GM12878 (cell line): ENCODE measurements at regions of chr3 and their contacts with region 1.

Region 1: GRCh38 chr3:152281133-152281713 is 12.5 kb downstream of the MBNL1 start:
- DNase-seq: no peak
- ATAC-seq: peak; percentile 68
- H3K4me3 ChIP-seq: peak overlapping the region; percentile 33; the same call in 1 of the 2 replicates
- H3K27ac ChIP-seq: peak overlapping the region; percentile 64
- H3K4me1 ChIP-seq: peaks cover 43% of the 10 kb centered on the region
- H3K27me3 ChIP-seq: no peaks in the 10 kb centered on the region
- CTCF ChIP-seq: no peak
- EP300 ChIP-seq: no peak
- POLR2A ChIP-seq: no peak
- RAD21 ChIP-seq: no peak

Region 2: GRCh38 chr3:152127058-152127457 is 154.2 kb before region 1 on chr3:
- CTCF ChIA-PET with region 1: no interaction called
- POLR2A ChIA-PET with region 1: no interaction called
- RAD21 ChIA-PET with region 1: no interaction called
- SMC1A ChIA-PET with region 1: no interaction called
- in situ Hi-C with region 1: no loop called
- intact Hi-C with region 1: no loop called
- DNase-seq: peak; percentile 85
- ATAC-seq: peak; percentile 98
- H3K4me3 ChIP-seq: no peak overlapping the region
- H3K27ac ChIP-seq: no peak overlapping the region
- H3K4me1 ChIP-seq: peaks cover 16% of the 10 kb centered on the region
- H3K27me3 ChIP-seq: no peaks in the 10 kb centered on the region
- CTCF ChIP-seq: no peak
- EP300 ChIP-seq: peak; percentile 77 to 83; a peak in 3 of 4 replicates
- POLR2A ChIP-seq: no peak
- RAD21 ChIP-seq: peak; percentile 12; the same call in 1 of the 2 replicates

Region 3: GRCh38 chr3:152241142-152242017 is 39.8 kb before region 1 on chr3:
- CTCF ChIA-PET with region 1: interaction called, 9 read pairs
- POLR2A ChIA-PET with region 1: interaction called, 4 read pairs
- RAD21 ChIA-PET with region 1: interaction called, 30 read pairs
- SMC1A ChIA-PET with region 1: interaction called, 39 read pairs
- in situ Hi-C with region 1: no loop called
- intact Hi-C with region 1: no loop called
- DNase-seq: no peak
- ATAC-seq: peak; percentile 69
- H3K4me3 ChIP-seq: no peak overlapping the region
- H3K27ac ChIP-seq: peak overlapping the region; percentile 91
- H3K4me1 ChIP-seq: peaks cover 27% of the 10 kb centered on the region
- H3K27me3 ChIP-seq: no peaks in the 10 kb centered on the region
- CTCF ChIP-seq: no peak
- EP300 ChIP-seq: no peak
- POLR2A ChIP-seq: no peak
- RAD21 ChIP-seq: no peak

Region 4: DNA sequence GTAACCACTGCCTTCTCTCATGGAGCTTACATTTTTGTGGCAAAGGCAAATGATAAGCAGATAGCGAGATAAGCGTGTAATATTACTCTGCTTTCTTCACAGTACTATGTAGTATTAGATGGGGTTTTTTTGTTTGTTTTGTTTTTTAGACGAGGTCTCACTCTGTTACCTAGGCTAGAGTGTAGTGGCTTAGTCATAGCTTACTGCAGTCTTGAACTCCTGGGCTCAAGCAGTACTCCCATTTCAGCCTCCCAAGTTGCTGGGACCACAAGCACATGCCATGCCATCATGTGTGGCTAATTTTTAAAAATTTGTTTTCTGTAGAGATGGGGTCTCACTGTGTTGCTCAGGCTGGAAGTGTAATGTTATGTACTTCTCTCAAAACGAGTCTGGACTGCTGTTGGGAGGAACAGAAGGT is 10.4 kb after region 1 on chr3:
- CTCF ChIA-PET with region 1: interaction called, 6 read pairs
- POLR2A ChIA-PET with region 1: interaction called, 3 read pairs
- RAD21 ChIA-PET with region 1: interaction called, 15 read pairs
- SMC1A ChIA-PET with region 1: interaction called, 115 read pairs
- in situ Hi-C with region 1: no loop called
- intact Hi-C with region 1: no loop called
- DNase-seq: no peak
- ATAC-seq: peak; percentile 47
- H3K4me3 ChIP-seq: no peak overlapping the region
- H3K27ac ChIP-seq: no peak overlapping the region
- H3K4me1 ChIP-seq: peaks cover 7% of the 10 kb centered on the region
- H3K27me3 ChIP-seq: no peaks in the 10 kb centered on the region
- CTCF ChIP-seq: no peak
- EP300 ChIP-seq: no peak
- POLR2A ChIP-seq: no peak
- RAD21 ChIP-seq: no peak

Region 5: DNA sequence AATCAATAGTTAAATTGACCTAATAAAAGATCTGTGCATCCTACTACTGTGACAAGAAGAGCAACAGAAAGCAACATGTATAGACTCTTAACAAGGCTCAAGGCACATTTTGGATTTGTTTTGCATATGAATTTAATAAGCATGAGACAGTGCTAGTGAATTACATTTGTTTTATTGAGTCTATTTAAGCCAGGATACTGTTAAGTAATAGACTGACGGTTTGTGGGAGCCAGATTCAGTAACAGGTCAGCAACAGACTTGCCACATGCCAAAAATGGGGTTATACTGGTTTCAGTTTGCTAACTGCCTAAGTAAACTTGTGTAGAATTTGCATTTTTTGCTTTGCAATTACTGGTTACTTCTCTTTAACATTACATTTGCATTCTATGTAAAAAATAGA is 41.5 kb after region 1 on chr3:
- CTCF ChIA-PET with region 1: interaction called, 3 read pairs
- POLR2A ChIA-PET with region 1: no interaction called
- RAD21 ChIA-PET with region 1: interaction called, 6 read pairs
- SMC1A ChIA-PET with region 1: interaction called, 16 read pairs
- in situ Hi-C with region 1: no loop called
- intact Hi-C with region 1: no loop called
- DNase-seq: peak; percentile 61
- ATAC-seq: peak; percentile 82
- H3K4me3 ChIP-seq: peak overlapping the region; percentile 6; the same call in 1 of the 2 replicates
- H3K27ac ChIP-seq: peak overlapping the region; percentile 51
- H3K4me1 ChIP-seq: peaks cover 21% of the 10 kb centered on the region
- H3K27me3 ChIP-seq: no peaks in the 10 kb centered on the region
- CTCF ChIP-seq: no peak
- EP300 ChIP-seq: peak; percentile 69 to 85
- POLR2A ChIP-seq: no peak
- RAD21 ChIP-seq: no peak

Region 6: DNA sequence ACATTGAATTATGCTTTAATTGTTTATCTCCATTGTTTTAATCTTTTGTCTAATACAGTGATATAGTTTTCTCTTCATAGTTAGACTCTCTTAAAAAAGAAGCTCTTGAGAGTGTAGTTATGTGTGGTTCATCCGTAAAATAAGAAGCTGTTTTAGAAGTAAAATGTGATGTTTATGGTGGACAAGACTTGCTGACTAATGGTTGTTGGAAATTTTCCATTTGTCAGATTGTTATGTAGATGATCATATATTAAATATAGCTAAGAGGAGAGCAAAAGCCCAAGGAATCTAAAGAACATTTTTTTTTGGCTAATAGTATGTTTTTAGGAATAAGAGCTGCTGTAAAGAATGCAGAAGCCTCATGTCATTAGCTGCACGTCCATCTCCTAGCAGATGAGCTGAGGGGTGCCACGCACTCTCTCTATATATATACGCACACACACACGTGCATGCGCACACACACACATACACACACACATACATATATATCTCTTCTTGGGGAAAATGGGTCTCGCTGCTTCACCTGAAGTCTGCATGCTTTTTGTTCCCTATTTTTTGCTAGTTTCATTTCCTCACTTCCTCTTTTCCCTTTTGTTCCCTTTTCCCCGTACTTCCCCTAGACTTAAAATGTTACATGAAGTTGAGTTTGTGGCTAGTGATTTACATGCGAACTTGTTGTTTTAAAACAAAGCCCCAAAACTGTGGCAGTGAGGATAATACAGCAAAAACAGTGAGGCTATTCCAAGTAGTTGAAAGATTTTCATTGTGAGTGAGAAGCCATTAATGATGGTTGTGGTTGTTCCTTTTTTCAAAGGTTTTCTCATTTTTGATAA is 95.3 kb after region 1 on chr3:
- CTCF ChIA-PET with region 1: no interaction called
- POLR2A ChIA-PET with region 1: interaction called, 3 read pairs
- RAD21 ChIA-PET with region 1: interaction called, 10 read pairs
- SMC1A ChIA-PET with region 1: interaction called, 10 read pairs
- in situ Hi-C with region 1: no loop called
- intact Hi-C with region 1: no loop called
- DNase-seq: peak; percentile 97
- ATAC-seq: peak; percentile 83
- H3K4me3 ChIP-seq: no peak overlapping the region; the same call in 1 of the 2 replicates
- H3K27ac ChIP-seq: peak overlapping the region; percentile 90
- H3K4me1 ChIP-seq: peaks cover 30% of the 10 kb centered on the region
- H3K27me3 ChIP-seq: no peaks in the 10 kb centered on the region
- CTCF ChIP-seq: no peak
- EP300 ChIP-seq: peak; percentile 95 to 99
- POLR2A ChIP-seq: peak; percentile 53
- RAD21 ChIP-seq: no peak

Region 7: GRCh38 chr3:152554980-152555379 is 273.8 kb after region 1 on chr3:
- CTCF ChIA-PET with region 1: no interaction called
- POLR2A ChIA-PET with region 1: no interaction called
- RAD21 ChIA-PET with region 1: no interaction called
- SMC1A ChIA-PET with region 1: no interaction called
- in situ Hi-C with region 1: no loop called
- intact Hi-C with region 1: no loop called
- DNase-seq: no peak
- ATAC-seq: no peak
- H3K4me3 ChIP-seq: no peak overlapping the region
- H3K27ac ChIP-seq: no peak overlapping the region
- H3K4me1 ChIP-seq: peaks cover 12% of the 10 kb centered on the region
- H3K27me3 ChIP-seq: no peaks in the 10 kb centered on the region
- CTCF ChIP-seq: no peak
- EP300 ChIP-seq: no peak
- POLR2A ChIP-seq: no peak
- RAD21 ChIP-seq: no peak